HepG2 (cell line): ENCODE measurements at regions of chr9 and their contacts with region 1.

Region 1: GRCh38 chr9:109098171-109098959 is 21.4 kb downstream of the TMEM245 start:
- DNase-seq: peak; percentile 68
- ATAC-seq: peak; percentile 99
- H3K4me3 ChIP-seq: no peak overlapping the region
- H3K27ac ChIP-seq: peak overlapping the region; percentile 43
- H3K4me1 ChIP-seq: peaks cover 67% of the 10 kb centered on the region
- H3K27me3 ChIP-seq: no peaks in the 10 kb centered on the region
- CTCF ChIP-seq: peak; percentile 75
- EP300 ChIP-seq: no peak
- POLR2A ChIP-seq: no peak
- RAD21 ChIP-seq: peak; percentile 24; the same call in 1 of the 2 replicates

Region 2: GRCh38 chr9:109132567-109133021 is 34.2 kb after region 1 on chr9:
- CTCF ChIA-PET with region 1: no interaction called
- POLR2A ChIA-PET with region 1: no interaction called
- in situ Hi-C with region 1: no loop called
- intact Hi-C with region 1: loop called (anchors 1 kb)
- DNase-seq: peak; percentile 19
- ATAC-seq: peak; percentile 77
- H3K4me3 ChIP-seq: peak overlapping the region; percentile 50 to 60 (median 59); a peak in 5 of 6 replicates
- H3K27ac ChIP-seq: peak overlapping the region; percentile 69
- H3K4me1 ChIP-seq: peaks cover 61% of the 10 kb centered on the region
- H3K27me3 ChIP-seq: no peaks in the 10 kb centered on the region
- CTCF ChIP-seq: peak; percentile 53
- EP300 ChIP-seq: no peak
- POLR2A ChIP-seq: no peak
- RAD21 ChIP-seq: no peak